Calu3 (cell line): ENCODE measurements at regions of chr10 and their contacts with region 1.

Region 1: GRCh38 chr10:25026463-25026862 is 10.1 kb downstream of the THNSL1 start:
- DNase-seq: no peak
- H3K4me3 Mint-ChIP-seq: no peak overlapping the region
- H3K27ac Mint-ChIP-seq: no peak overlapping the region
- H3K4me1 Mint-ChIP-seq: no peaks in the 10 kb centered on the region
- H3K27me3 Mint-ChIP-seq: no peaks in the 10 kb centered on the region
- CTCF ChIP-seq: no peak

Region 2: GRCh38 chr10:25080880-25081581 is 54.6 kb after region 1 on chr10:
- CTCF ChIA-PET with region 1: interaction called, 5 read pairs
- intact Hi-C with region 1: loop called (anchors 1 kb)
- DNase-seq: peak; percentile 87
- H3K4me3 Mint-ChIP-seq: no peak overlapping the region
- H3K27ac Mint-ChIP-seq: no peak overlapping the region
- H3K4me1 Mint-ChIP-seq: peaks cover 25% of the 10 kb centered on the region
- H3K27me3 Mint-ChIP-seq: no peaks in the 10 kb centered on the region
- CTCF ChIP-seq: peak; percentile 82

Region 3: GRCh38 chr10:25226775-25227682 is 200.6 kb after region 1 on chr10:
- CTCF ChIA-PET with region 1: no interaction called
- intact Hi-C with region 1: loop called (anchors 5 kb)
- DNase-seq: peak; percentile 59
- H3K4me3 Mint-ChIP-seq: no peak overlapping the region
- H3K27ac Mint-ChIP-seq: no peak overlapping the region
- H3K4me1 Mint-ChIP-seq: no peaks in the 10 kb centered on the region
- H3K27me3 Mint-ChIP-seq: no peaks in the 10 kb centered on the region
- CTCF ChIP-seq: peak; percentile 72